Dorsolateral prefrontal cortex (tissue), 120 donors: ENCODE measurements at regions of chr15 and their contacts with region 1.

Region 1: DNA sequence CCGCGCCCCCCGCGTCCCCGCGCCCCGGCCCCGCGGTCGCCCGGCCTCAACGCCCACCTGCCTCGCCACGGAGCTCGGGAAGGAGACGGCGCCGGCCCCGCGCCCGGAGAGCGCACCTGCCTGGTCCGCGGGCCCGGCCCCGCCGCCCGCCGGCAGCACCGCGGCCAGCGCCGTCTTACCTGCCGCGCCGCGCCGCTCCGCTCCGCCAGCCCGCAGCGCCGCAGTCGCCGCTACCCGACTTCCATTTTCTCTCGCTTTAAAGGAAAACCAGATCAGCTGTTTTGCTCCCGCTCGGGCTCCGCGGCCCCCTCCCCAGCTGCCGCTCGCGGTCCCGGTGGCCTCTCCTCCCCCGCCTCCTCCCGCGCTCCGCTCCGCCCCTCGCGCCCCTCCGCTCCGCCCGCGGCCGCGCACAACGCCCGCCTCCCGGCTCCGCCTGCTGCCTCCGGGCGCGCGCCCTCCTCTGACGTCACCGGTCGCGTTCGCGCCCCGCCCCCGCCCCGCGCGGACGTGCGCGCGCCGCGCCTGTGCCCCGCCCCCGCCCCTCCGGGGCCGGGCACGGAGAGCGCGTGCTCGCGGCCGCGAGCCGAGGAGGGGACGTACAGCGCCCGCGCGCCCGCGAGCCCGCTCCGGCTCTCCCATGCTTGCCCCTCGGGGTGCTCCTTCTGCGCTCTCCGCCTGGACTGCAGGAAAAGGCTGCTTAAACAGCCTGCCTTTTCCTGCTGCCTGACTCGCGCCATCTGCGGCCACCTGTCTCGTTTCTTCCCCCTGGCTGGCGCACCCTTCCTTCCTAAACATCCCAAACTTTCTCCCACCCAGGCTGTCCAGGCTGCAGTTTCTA is 159.8 kb upstream of the CHRNA7 start:
- DNase-seq: peak; percentile 75 to 95 (median 88)
- H3K4me3 ChIP-seq: peak within 1 kb of the TSS; percentile 52 to 90 (median 72)
- H3K27ac ChIP-seq: peak within 1 kb of the TSS; percentile 54 to 97 (median 89)
- H3K27me3 ChIP-seq: no peaks in the 10 kb centered on the region
- CTCF ChIP-seq: peak in 19 of 56 donors; percentile 3 to 44 (median 18)

Region 2: DNA sequence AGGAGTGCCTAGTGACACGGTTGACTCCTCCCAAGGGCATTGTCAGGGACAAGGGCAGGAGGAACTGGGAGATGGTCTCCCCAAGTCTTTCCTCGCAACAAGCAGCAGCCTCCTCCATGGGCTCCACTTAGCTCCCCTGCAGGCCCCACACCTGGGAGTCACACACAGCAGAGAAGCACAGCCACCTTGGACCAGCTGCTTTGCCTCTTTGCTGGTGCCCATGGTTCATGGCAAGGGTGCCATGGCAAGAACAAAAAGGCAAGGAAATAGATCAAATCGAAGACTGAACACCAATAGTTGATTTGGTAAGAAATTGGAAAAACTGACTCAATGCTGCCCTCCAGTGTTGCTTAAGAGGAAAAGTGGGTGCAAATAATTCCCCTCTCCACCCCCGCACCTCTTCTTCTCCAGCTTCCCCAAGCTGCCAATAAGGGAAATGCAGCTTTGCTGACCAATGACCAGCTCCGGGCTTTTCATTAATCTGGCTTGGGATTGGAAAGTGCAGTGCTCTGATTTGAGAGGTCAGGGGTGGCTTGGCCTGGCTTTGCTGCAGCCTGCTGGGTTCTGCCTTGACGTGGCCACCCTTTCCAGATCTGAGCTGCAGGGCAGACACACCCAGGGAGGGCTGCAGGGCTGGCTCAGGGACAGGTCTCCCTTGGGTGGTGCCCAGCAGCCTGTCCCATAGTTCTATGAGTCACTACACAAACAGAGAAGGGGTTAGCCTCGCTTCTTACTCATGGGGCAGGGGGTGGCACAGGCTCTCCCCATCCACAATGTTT is 381.9 kb before region 1 on chr15:
- intact Hi-C with region 1: no loop called
- DNase-seq: peak in 4 of 10 donors; percentile 38 to 66 (median 55)
- H3K4me3 ChIP-seq: no peak overlapping the region
- H3K27ac ChIP-seq: peak overlapping the region in 50 of 59 donors; percentile 16 to 83 (median 64)
- H3K27me3 ChIP-seq: no peaks in the 10 kb centered on the region
- CTCF ChIP-seq: peak; percentile 80 to 99 (median 93)

Region 3: GRCh38 chr15:31526916-31527690 is 343.4 kb before region 1 on chr15:
- intact Hi-C with region 1: no loop called
- DNase-seq: no peak
- H3K4me3 ChIP-seq: no peak overlapping the region
- H3K27ac ChIP-seq: peak overlapping the region in 1 of 59 donors; percentile 45
- H3K27me3 ChIP-seq: no peaks in the 10 kb centered on the region
- CTCF ChIP-seq: no peak

Region 4: GRCh38 chr15:31758126-31758525 is 112.4 kb before region 1 on chr15:
- intact Hi-C with region 1: loop called in 1 of 2 experiments (anchors 5 kb)
- DNase-seq: peak; percentile 83 to 95 (median 90)
- H3K4me3 ChIP-seq: peak overlapping the region in 2 of 59 donors; percentile 2 to 10
- H3K27ac ChIP-seq: peak overlapping the region; percentile 23 to 92 (median 81)
- H3K27me3 ChIP-seq: no peaks in the 10 kb centered on the region
- CTCF ChIP-seq: peak in 2 of 56 donors; percentile 13 to 21

Region 5: DNA sequence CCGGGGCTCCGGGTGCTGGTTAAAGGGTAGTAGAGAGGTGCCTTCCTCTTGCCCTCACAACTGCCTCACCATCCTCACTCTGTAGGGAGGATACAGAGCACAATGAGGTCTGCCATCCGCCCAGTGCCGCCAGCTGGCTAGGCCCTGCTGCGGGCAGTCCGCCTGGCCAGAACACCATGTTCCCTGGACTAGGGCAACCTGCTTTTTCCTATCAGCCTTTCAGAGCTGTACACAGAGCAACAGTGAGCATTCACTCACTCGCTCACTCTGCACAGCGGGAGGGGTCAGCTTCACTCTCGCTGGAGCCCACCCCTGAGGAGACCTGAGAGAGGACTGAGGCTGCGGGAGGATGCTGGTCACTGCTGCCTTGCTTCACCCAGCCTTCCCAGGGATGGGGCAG is 58.9 kb before region 1 on chr15:
- intact Hi-C with region 1: loop called in 1 of 2 experiments (anchors 5 kb)
- DNase-seq: peak; percentile 65 to 88 (median 80)
- H3K4me3 ChIP-seq: peak overlapping the region in 3 of 59 donors; percentile 3 to 13 (median 12)
- H3K27ac ChIP-seq: peak overlapping the region; percentile 30 to 98 (median 89)
- H3K27me3 ChIP-seq: no peaks in the 10 kb centered on the region
- CTCF ChIP-seq: peak in 18 of 56 donors; percentile 6 to 47 (median 18)

Region 6: GRCh38 chr15:31954374-31955172 is 84.0 kb after region 1 on chr15:
- intact Hi-C with region 1: loop called in 1 of 2 experiments (anchors 2 kb)
- DNase-seq: peak in 6 of 10 donors; percentile 29 to 78 (median 70)
- H3K4me3 ChIP-seq: no peak overlapping the region
- H3K27ac ChIP-seq: peak overlapping the region in 34 of 59 donors; percentile 4 to 75 (median 46)
- H3K27me3 ChIP-seq: peaks cover 0 to 4% (median 0%) of the 10 kb centered on the region in 45 donors
- CTCF ChIP-seq: no peak

Region 7: GRCh38 chr15:31977812-31978661 is 107.5 kb after region 1 on chr15:
- intact Hi-C with region 1: loop called in 1 of 2 experiments (anchors 10 kb)
- DNase-seq: peak in 9 of 10 donors; percentile 53 to 82 (median 65)
- H3K4me3 ChIP-seq: peak overlapping the region in 1 of 59 donors; percentile 23
- H3K27ac ChIP-seq: no peak overlapping the region
- H3K27me3 ChIP-seq: peaks cover 0 to 23% (median 0%) of the 10 kb centered on the region in 45 donors
- CTCF ChIP-seq: peak in 55 of 56 donors; percentile 76 to 99 (median 92)

Region 8: GRCh38 chr15:32003558-32003957 is 133.0 kb after region 1 on chr15:
- intact Hi-C with region 1: no loop called
- DNase-seq: no peak
- H3K4me3 ChIP-seq: no peak overlapping the region
- H3K27ac ChIP-seq: no peak overlapping the region
- H3K27me3 ChIP-seq: peaks cover 0 to 7% (median 0%) of the 10 kb centered on the region in 45 donors
- CTCF ChIP-seq: no peak

Region 9: GRCh38 chr15:32060706-32061105 is 190.2 kb after region 1 on chr15:
- intact Hi-C with region 1: no loop called
- DNase-seq: no peak
- H3K4me3 ChIP-seq: no peak overlapping the region
- H3K27ac ChIP-seq: no peak overlapping the region
- H3K27me3 ChIP-seq: peaks cover 0 to 3% (median 0%) of the 10 kb centered on the region in 45 donors
- CTCF ChIP-seq: no peak